ENCODE measurements at regions of chr12 and their contacts with region 1.

Region 1: GRCh38 chr12:62785941-62786559 is 148.9 kb downstream of the PPM1H start:
- DNase-seq: peak; percentile 91

Region 2: DNA sequence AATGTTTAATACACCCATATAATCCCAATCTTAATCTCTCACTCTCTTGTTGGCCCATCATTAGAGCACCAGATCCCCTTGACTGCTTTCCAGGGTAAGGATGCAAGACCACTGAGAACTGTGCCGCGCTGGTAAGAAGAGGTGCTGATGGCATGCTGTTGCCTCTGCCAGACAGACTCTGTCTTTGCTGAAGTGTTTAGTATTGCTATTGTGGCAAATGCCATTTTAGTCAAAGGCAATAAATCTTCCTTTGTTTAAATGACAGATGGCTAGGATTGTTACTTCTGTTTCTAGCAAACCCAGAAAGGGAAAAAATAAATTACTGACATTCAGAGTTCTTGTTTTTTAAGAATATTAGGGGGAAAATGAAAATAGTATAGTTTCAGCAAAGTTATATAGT is 167.1 kb before region 1 on chr12:
- in situ Hi-C with region 1: loop called (anchors 10 kb)
- DNase-seq: no peak

Region 3: GRCh38 chr12:63164911-63165310 is 378.9 kb after region 1 on chr12:
- in situ Hi-C with region 1: no loop called
- DNase-seq: no peak